ENCODE measurements at regions of chr2 and their contacts with region 1.

Region 1: GRCh38 chr2:196068271-196069209 is at the start of gene DNAH7:
- DNase-seq: peak; percentile 64
- ATAC-seq: peak; percentile 98
- H3K4me3 ChIP-seq: peak within 1 kb of the TSS; percentile 68
- H3K27ac ChIP-seq: peak within 1 kb of the TSS; percentile 43
- H3K4me1 ChIP-seq: no peaks in the 10 kb centered on the region; the same call in 1 of the 2 replicates
- H3K27me3 ChIP-seq: no peaks in the 10 kb centered on the region
- CTCF ChIP-seq: peak; percentile 91 to 98 (median 97); a peak in 5 of 6 replicates
- EP300 ChIP-seq: no peak; a peak in 1 of 4 replicates
- POLR2A ChIP-seq: peak; percentile 22; the same call in 1 of the 2 replicates
- RAD21 ChIP-seq: peak; percentile 92
- polyA plus RNA-seq, gene DNAH7: 0.05 to 0.14 TPM

Region 2: GRCh38 chr2:195498176-195498575 is 570.4 kb before region 1 on chr2:
- CTCF ChIA-PET with region 1: interaction called, 30 read pairs
- POLR2A ChIA-PET with region 1: no interaction called
- RAD21 ChIA-PET with region 1: interaction called, 16 read pairs
- SMC1A ChIA-PET with region 1: interaction called, 8 read pairs
- in situ Hi-C with region 1: no loop called
- intact Hi-C with region 1: loop called (anchors 5 kb)
- DNase-seq: no peak
- ATAC-seq: peak; percentile 78
- H3K4me3 ChIP-seq: no peak overlapping the region
- H3K27ac ChIP-seq: no peak overlapping the region
- H3K4me1 ChIP-seq: no peaks in the 10 kb centered on the region
- H3K27me3 ChIP-seq: no peaks in the 10 kb centered on the region
- CTCF ChIP-seq: peak; percentile 33 to 56 (median 44)
- EP300 ChIP-seq: no peak
- POLR2A ChIP-seq: no peak
- RAD21 ChIP-seq: peak; percentile 70

Region 3: GRCh38 chr2:195656859-195657633 is 411.5 kb before region 1 on chr2 and contains the start of gene SLC39A10:
- CTCF ChIA-PET with region 1: interaction called, 89 read pairs
- POLR2A ChIA-PET with region 1: interaction called, 7 read pairs
- RAD21 ChIA-PET with region 1: interaction called, 27 read pairs
- SMC1A ChIA-PET with region 1: interaction called, 28 read pairs
- in situ Hi-C with region 1: no loop called
- intact Hi-C with region 1: loop called (anchors 2 kb)
- DNase-seq: peak; percentile 93
- ATAC-seq: peak; percentile 78
- H3K4me3 ChIP-seq: peak within 1 kb of the TSS; percentile 98
- H3K27ac ChIP-seq: peak within 1 kb of the TSS; percentile 96
- H3K4me1 ChIP-seq: no peaks in the 10 kb centered on the region
- H3K27me3 ChIP-seq: no peaks in the 10 kb centered on the region
- CTCF ChIP-seq: peak in 1 of 3 experiments; percentile 25; a peak in 1 of 6 replicates
- EP300 ChIP-seq: 0 out of 4 replicates have a peak, but pooled peaks of 1 of the 2 experiments have one; percentile 18
- POLR2A ChIP-seq: peak; percentile 98
- RAD21 ChIP-seq: no peak
- polyA plus RNA-seq, gene SLC39A10: 2.0 to 4.9 TPM

Region 4: GRCh38 chr2:195687320-195688086 is 381.0 kb before region 1 on chr2:
- CTCF ChIA-PET with region 1: interaction called, 10 read pairs
- POLR2A ChIA-PET with region 1: no interaction called
- RAD21 ChIA-PET with region 1: no interaction called
- SMC1A ChIA-PET with region 1: interaction called, 4 read pairs
- in situ Hi-C with region 1: no loop called
- intact Hi-C with region 1: no loop called
- DNase-seq: peak; percentile 30
- ATAC-seq: peak; percentile 75
- H3K4me3 ChIP-seq: no peak overlapping the region
- H3K27ac ChIP-seq: no peak overlapping the region
- H3K4me1 ChIP-seq: no peaks in the 10 kb centered on the region
- H3K27me3 ChIP-seq: no peaks in the 10 kb centered on the region
- CTCF ChIP-seq: no peak
- EP300 ChIP-seq: no peak
- POLR2A ChIP-seq: no peak
- RAD21 ChIP-seq: no peak

Region 5: GRCh38 chr2:195937176-195937575 is 131.4 kb before region 1 on chr2:
- CTCF ChIA-PET with region 1: interaction called, 7 read pairs
- POLR2A ChIA-PET with region 1: no interaction called
- RAD21 ChIA-PET with region 1: interaction called, 3 read pairs
- SMC1A ChIA-PET with region 1: interaction called, 19 read pairs
- in situ Hi-C with region 1: no loop called
- intact Hi-C with region 1: no loop called
- DNase-seq: no peak
- ATAC-seq: no peak
- H3K4me3 ChIP-seq: no peak overlapping the region
- H3K27ac ChIP-seq: no peak overlapping the region
- H3K4me1 ChIP-seq: no peaks in the 10 kb centered on the region
- H3K27me3 ChIP-seq: no peaks in the 10 kb centered on the region
- CTCF ChIP-seq: no peak
- EP300 ChIP-seq: no peak
- POLR2A ChIP-seq: no peak
- RAD21 ChIP-seq: no peak

Region 6: DNA sequence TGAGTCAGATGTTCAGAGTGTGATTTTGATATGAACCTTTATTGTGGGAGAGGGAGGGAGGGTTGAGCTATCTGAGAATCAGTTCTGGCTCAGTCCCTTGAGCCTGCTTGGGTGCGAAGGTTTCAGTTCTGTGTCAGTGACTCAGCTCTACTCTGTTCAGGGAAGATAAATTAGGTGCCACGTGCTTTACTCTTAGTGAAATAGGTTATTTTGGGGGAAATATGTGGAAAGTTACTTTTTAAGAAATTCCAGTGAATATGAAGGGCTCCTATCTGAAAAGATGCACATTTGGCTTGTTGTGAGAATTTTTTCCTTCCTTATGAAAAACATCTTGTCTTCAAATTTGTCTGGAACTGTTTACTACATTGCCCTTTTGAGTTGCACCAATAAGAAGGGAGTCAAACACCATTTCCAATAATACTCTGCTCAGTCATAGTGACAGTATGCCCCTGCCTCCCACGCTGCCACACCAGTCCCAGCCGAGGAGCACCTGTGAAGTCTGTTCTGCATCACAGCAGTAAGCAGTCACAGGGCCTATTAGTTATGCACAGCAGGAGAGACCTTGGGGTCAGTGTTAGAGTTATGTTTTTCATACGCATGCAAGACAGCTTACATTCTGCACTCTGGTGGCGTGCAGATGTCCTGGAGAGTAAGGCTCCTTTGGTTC is 32.9 kb after region 1 on chr2:
- CTCF ChIA-PET with region 1: interaction called, 14 read pairs
- POLR2A ChIA-PET with region 1: no interaction called
- RAD21 ChIA-PET with region 1: interaction called, 10 read pairs
- SMC1A ChIA-PET with region 1: interaction called, 3 read pairs
- in situ Hi-C with region 1: no loop called
- intact Hi-C with region 1: no loop called
- DNase-seq: peak; percentile 80
- ATAC-seq: peak; percentile 96
- H3K4me3 ChIP-seq: no peak overlapping the region
- H3K27ac ChIP-seq: peak overlapping the region; percentile 34
- H3K4me1 ChIP-seq: peaks cover 24% of the 10 kb centered on the region
- H3K27me3 ChIP-seq: no peaks in the 10 kb centered on the region
- CTCF ChIP-seq: peak in 1 of 3 experiments; percentile 14; a peak in 1 of 6 replicates
- EP300 ChIP-seq: peak; percentile 57 to 74
- POLR2A ChIP-seq: 0 out of 2 replicates have a peak, but pooled peaks have one; percentile 16
- RAD21 ChIP-seq: peak; percentile 26; the same call in 1 of the 2 replicates